MCF 10A (cell line): ENCODE measurements at regions of chr11 and their contacts with region 1.

Region 1: GRCh38 chr11:118907051-118908042 is 18.4 kb downstream of the BCL9L start:
- DNase-seq: peak; percentile 85
- H3K4me3 Mint-ChIP-seq: peak overlapping the region; percentile 33
- H3K27ac Mint-ChIP-seq: no peak overlapping the region
- H3K4me1 Mint-ChIP-seq: peaks cover 47% of the 10 kb centered on the region
- H3K27me3 Mint-ChIP-seq: no peaks in the 10 kb centered on the region
- CTCF ChIP-seq: peak; percentile 94

Region 2: GRCh38 chr11:118290923-118291322 is 616.4 kb before region 1 on chr11:
- CTCF ChIA-PET with region 1: no interaction called
- POLR2A ChIA-PET with region 1: no interaction called
- intact Hi-C with region 1: no loop called
- DNase-seq: peak; percentile 75
- H3K4me3 Mint-ChIP-seq: peak overlapping the region; percentile 19
- H3K27ac Mint-ChIP-seq: no peak overlapping the region
- H3K4me1 Mint-ChIP-seq: peaks cover 19% of the 10 kb centered on the region
- H3K27me3 Mint-ChIP-seq: no peaks in the 10 kb centered on the region
- CTCF ChIP-seq: peak; percentile 43

Region 3: GRCh38 chr11:118928108-118928870 is 20.9 kb after region 1 on chr11:
- CTCF ChIA-PET with region 1: interaction called, 20 read pairs
- POLR2A ChIA-PET with region 1: no interaction called
- intact Hi-C with region 1: loop called (anchors 1 kb)
- DNase-seq: peak; percentile 95
- H3K4me3 Mint-ChIP-seq: peak overlapping the region; percentile 84
- H3K27ac Mint-ChIP-seq: peak overlapping the region; percentile 84
- H3K4me1 Mint-ChIP-seq: peaks cover 31% of the 10 kb centered on the region
- H3K27me3 Mint-ChIP-seq: no peaks in the 10 kb centered on the region
- CTCF ChIP-seq: peak; percentile 77

Region 4: GRCh38 chr11:119057000-119057769 is 149.8 kb after region 1 on chr11 and contains the start of gene HYOU1:
- CTCF ChIA-PET with region 1: no interaction called
- POLR2A ChIA-PET with region 1: no interaction called
- intact Hi-C with region 1: no loop called
- DNase-seq: peak; percentile 97
- H3K4me3 Mint-ChIP-seq: peak within 1 kb of the TSS; percentile 96
- H3K27ac Mint-ChIP-seq: peak within 1 kb of the TSS; percentile 98
- H3K4me1 Mint-ChIP-seq: peaks cover 19% of the 10 kb centered on the region
- H3K27me3 Mint-ChIP-seq: no peaks in the 10 kb centered on the region
- CTCF ChIP-seq: peak; percentile 29
- total RNA-seq, gene HYOU1: 398 and 664 TPM in 2 replicates